Activated B cell treated with CpG ODN at 0.5 μM for 24 hours (primary cell): ENCODE measurements at regions of chr2 and their contacts with region 1.

Region 1: GRCh38 chr2:201171259-201171814 is 11.6 kb upstream of the CASP10 start:
- DNase-seq: no peak
- ATAC-seq: no peak
- H3K4me3 Mint-ChIP-seq: no peak overlapping the region
- H3K27ac Mint-ChIP-seq: no peak overlapping the region
- H3K4me1 Mint-ChIP-seq: peaks cover 32% of the 10 kb centered on the region
- H3K27me3 Mint-ChIP-seq: no peaks in the 10 kb centered on the region
- CTCF ChIP-seq: no peak

Region 2: GRCh38 chr2:200578778-200579177 is 592.6 kb before region 1 on chr2:
- CTCF ChIA-PET with region 1: no interaction called
- POLR2A ChIA-PET with region 1: no interaction called
- intact Hi-C with region 1: loop called (anchors 2 kb)
- DNase-seq: no peak
- ATAC-seq: peak; percentile 42
- H3K4me3 Mint-ChIP-seq: no peak overlapping the region
- H3K27ac Mint-ChIP-seq: no peak overlapping the region
- H3K4me1 Mint-ChIP-seq: no peaks in the 10 kb centered on the region
- H3K27me3 Mint-ChIP-seq: peaks cover 2% of the 10 kb centered on the region
- CTCF ChIP-seq: no peak

Region 3: GRCh38 chr2:201194097-201194496 is 22.8 kb after region 1 on chr2:
- CTCF ChIA-PET with region 1: no interaction called
- POLR2A ChIA-PET with region 1: no interaction called
- intact Hi-C with region 1: loop called (anchors 2 kb)
- DNase-seq: no peak
- ATAC-seq: peak; percentile 92
- H3K4me3 Mint-ChIP-seq: peak overlapping the region; percentile 60
- H3K27ac Mint-ChIP-seq: peak overlapping the region; percentile 75
- H3K4me1 Mint-ChIP-seq: peaks cover 70% of the 10 kb centered on the region
- H3K27me3 Mint-ChIP-seq: no peaks in the 10 kb centered on the region
- CTCF ChIP-seq: no peak

Region 4: DNA sequence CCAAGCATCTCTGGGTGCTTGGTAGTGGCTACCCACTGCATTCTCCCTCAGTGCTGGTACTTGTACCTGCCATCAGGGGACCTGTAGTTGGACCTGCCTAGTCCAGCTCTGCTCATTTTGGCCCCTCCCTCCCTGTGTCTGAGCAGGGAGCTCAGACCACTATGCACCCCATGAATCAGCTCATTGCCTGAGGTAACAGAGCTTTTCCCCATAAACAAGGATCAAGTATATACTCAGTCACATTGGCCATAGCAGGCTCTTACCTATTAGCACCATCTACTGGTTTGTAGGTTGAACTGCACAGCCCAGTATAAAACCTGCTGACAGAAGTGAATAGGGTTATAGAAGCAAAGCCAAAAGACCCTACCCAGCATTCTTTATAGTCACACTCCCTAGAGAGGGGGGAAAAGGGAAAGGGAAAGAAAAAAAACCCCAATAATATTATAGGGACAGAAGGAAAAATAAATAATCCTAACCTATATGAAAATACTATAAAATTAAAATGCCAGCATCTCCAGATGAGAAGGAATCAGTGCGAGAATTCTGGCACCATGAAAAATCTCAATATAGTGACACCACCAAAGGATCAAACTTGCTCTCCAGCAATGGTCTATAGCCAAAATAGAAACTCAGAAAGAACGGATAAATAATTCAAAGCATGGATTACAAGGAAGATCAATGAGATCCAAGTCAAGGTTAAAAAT is 192.7 kb after region 1 on chr2:
- CTCF ChIA-PET with region 1: no interaction called
- POLR2A ChIA-PET with region 1: no interaction called
- intact Hi-C with region 1: no loop called
- DNase-seq: no peak
- ATAC-seq: peak; percentile 97
- H3K4me3 Mint-ChIP-seq: no peak overlapping the region
- H3K27ac Mint-ChIP-seq: peak overlapping the region; percentile 56
- H3K4me1 Mint-ChIP-seq: peaks cover 5% of the 10 kb centered on the region
- H3K27me3 Mint-ChIP-seq: no peaks in the 10 kb centered on the region
- CTCF ChIP-seq: peak; percentile 93

Region 5: GRCh38 chr2:202718614-202719013 is 1547.3 kb after region 1 on chr2:
- CTCF ChIA-PET with region 1: no interaction called
- POLR2A ChIA-PET with region 1: no interaction called
- intact Hi-C with region 1: no loop called
- DNase-seq: no peak
- ATAC-seq: no peak
- H3K4me3 Mint-ChIP-seq: no peak overlapping the region
- H3K27ac Mint-ChIP-seq: peak overlapping the region; percentile 61
- H3K4me1 Mint-ChIP-seq: peaks cover 38% of the 10 kb centered on the region
- H3K27me3 Mint-ChIP-seq: no peaks in the 10 kb centered on the region
- CTCF ChIP-seq: no peak